Sciatic nerve (tissue), 2 donors: ENCODE measurements at regions of chr4 and their contacts with region 1.

Region 1: DNA sequence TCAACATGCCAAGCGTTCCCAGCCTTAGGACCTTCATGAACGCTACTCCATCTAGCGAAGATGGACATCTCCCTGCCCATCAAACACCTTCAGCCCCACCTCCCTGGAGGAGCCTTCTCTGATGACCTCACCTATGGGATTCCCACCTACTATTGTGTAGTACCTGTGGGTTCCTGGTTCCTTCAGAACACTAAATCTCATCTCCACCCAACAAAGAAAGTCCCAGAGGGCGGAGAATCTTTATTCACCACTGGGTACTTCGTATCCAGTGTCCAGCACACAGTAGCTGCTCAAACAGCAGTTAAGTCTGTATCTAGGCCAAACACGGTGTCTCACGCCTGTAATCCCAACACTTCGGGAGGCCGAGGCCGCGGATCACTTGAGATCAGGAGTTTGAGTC is 10.1 kb downstream of the RBM47 start:
- DNase-seq: no peak
- ATAC-seq: no peak

Region 2: DNA sequence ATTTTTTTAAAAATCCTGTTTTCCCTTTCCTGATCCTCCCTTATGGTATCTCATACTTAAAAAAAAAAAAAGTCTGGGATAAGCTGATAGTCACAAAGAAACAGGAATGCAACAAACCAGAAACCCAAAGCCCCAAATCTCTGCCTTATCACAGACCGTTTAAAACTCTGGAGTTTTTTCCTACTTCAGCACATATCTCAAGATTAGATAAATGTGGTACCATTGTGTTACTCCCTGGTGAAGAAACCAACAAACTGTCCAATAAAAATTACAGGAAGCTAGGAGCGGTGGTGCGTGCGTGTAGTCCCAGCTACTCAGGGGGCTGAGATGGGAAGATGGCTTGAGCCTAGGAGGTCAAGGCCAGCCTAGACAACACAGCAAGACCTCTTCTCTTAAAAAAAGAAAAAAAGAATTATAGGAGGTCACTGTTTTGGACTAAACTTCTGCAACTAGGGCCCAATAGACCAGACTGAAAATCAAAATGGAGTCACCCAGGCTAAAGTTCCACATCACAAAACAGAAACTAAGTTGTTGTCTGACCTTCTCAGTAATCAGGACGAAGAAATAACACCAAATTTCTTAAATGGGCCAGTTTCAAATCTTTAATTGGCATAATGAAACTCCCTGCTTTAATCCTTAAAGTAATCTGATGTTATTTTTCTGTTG is 41.9 kb before region 1 on chr4:
- intact Hi-C with region 1: loop called (anchors 1 kb)
- DNase-seq: no peak
- ATAC-seq: peak; percentile 11

Region 3: GRCh38 chr4:40778090-40778489 is 158.5 kb after region 1 on chr4:
- intact Hi-C with region 1: no loop called
- DNase-seq: no peak
- ATAC-seq: no peak